K562 (cell line): ENCODE measurements at regions of chr12 and their contacts with region 1.

Region 1: GRCh38 chr12:102119674-102120563 is at the starts of genes NUP37 and PARPBP:
- DNase-seq: peak; percentile 91 to 95 (median 92)
- ATAC-seq: peak; percentile 97
- H3K4me3 ChIP-seq: peak within 1 kb of the TSS; percentile 84
- H3K27ac ChIP-seq: peak within 1 kb of the TSS; percentile 85
- H3K4me1 ChIP-seq: peaks cover 0 to 8% of the 10 kb centered on the region in 2 experiments; a peak in 2 of 5 replicates
- H3K27me3 ChIP-seq: no peaks in the 10 kb centered on the region
- CTCF ChIP-seq: peak in 2 of 3 experiments; percentile 8 to 25; a peak in 1 of 6 replicates
- EP300 ChIP-seq: no peak
- POLR2A ChIP-seq: peak; percentile 96
- RAD21 ChIP-seq: no peak; a peak in 1 of 4 replicates
- polyA plus RNA-seq, gene NUP37: 355 to 429 TPM
- polyA plus RNA-seq, gene PARPBP: 56.2 to 59.1 TPM

Region 2: GRCh38 chr12:102061560-102062418 is 58.1 kb before region 1 on chr12 and contains the start of gene WASHC3:
- CTCF ChIA-PET with region 1: no interaction called
- POLR2A ChIA-PET with region 1: interaction called, 7 read pairs
- in situ Hi-C with region 1: no loop called
- intact Hi-C with region 1: loop called (anchors 2 kb)
- DNase-seq: peak; percentile 87 to 97 (median 88)
- ATAC-seq: peak; percentile 97
- H3K4me3 ChIP-seq: peak within 1 kb of the TSS; percentile 71
- H3K27ac ChIP-seq: peak within 1 kb of the TSS; percentile 70
- H3K4me1 ChIP-seq: peaks cover 0 to 8% of the 10 kb centered on the region in 2 experiments; a peak in 2 of 5 replicates
- H3K27me3 ChIP-seq: no peaks in the 10 kb centered on the region
- CTCF ChIP-seq: no peak
- EP300 ChIP-seq: no peak; the same call in 1 of the 2 replicates
- POLR2A ChIP-seq: peak; percentile 79
- RAD21 ChIP-seq: no peak
- polyA plus RNA-seq, gene WASHC3: 67.9 to 74.9 TPM

Region 3: DNA sequence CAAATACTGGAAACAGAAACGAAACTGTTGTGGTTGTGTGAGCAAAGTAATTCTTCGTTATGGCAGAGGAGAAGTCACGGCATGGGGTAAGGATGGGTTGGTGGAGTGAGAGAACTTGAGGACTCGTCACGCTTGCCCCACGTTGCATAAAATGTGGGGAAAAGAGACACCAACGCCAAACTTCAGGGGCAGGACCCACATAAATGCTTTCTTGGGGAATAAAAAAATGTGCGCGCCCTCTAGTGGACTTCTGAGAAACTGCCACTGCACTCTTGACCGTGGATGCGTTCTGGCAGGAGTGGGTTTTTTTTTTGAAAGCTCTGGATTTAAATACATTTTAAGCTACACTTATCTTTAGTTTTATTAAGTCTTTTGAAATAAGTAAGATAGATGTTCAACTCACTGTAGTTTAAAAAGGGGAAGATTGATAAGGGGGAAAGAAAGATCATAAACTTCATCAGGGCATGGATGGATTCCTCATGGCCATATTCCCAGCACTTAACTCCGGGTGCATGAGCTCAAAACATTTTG is 364.6 kb after region 1 on chr12:
- CTCF ChIA-PET with region 1: no interaction called
- POLR2A ChIA-PET with region 1: no interaction called
- in situ Hi-C with region 1: no loop called
- intact Hi-C with region 1: loop called (anchors 5 kb)
- DNase-seq: peak; percentile 64 to 73 (median 68)
- ATAC-seq: peak; percentile 68
- H3K4me3 ChIP-seq: no peak overlapping the region
- H3K27ac ChIP-seq: no peak overlapping the region
- H3K4me1 ChIP-seq: peaks cover 0 to 7% of the 10 kb centered on the region in 2 experiments; a peak in 3 of 5 replicates
- H3K27me3 ChIP-seq: no peaks in the 10 kb centered on the region
- CTCF ChIP-seq: peak; percentile 68 to 85 (median 82)
- EP300 ChIP-seq: no peak
- POLR2A ChIP-seq: no peak
- RAD21 ChIP-seq: peak; percentile 54 to 71

Region 4: GRCh38 chr12:103799870-103800771 is 1680.2 kb after region 1 on chr12:
- CTCF ChIA-PET with region 1: no interaction called
- POLR2A ChIA-PET with region 1: no interaction called
- in situ Hi-C with region 1: loop called (anchors 10 kb)
- intact Hi-C with region 1: no loop called
- DNase-seq: peak in 3 of 4 experiments; percentile 32 to 64 (median 48)
- ATAC-seq: peak; percentile 46
- H3K4me3 ChIP-seq: no peak overlapping the region
- H3K27ac ChIP-seq: 0 out of 3 replicates have a peak overlapping the region, but pooled peaks have one; percentile 18
- H3K4me1 ChIP-seq: peaks cover 14 to 19% of the 10 kb centered on the region in 2 experiments
- H3K27me3 ChIP-seq: no peaks in the 10 kb centered on the region
- CTCF ChIP-seq: no peak
- EP300 ChIP-seq: peak; percentile 68
- POLR2A ChIP-seq: no peak
- RAD21 ChIP-seq: no peak